ENCODE measurements at regions of chr3 and their contacts with region 1.

Region 1: GRCh38 chr3:121545574-121546455 is at the start of gene POLQ:
- DNase-seq: peak; percentile 91
- H3K4me3 ChIP-seq: peak within 1 kb of the TSS; percentile 65 to 93 (median 67)
- H3K27ac ChIP-seq: peak within 1 kb of the TSS; percentile 17
- H3K4me1 ChIP-seq: peaks cover 12% of the 10 kb centered on the region
- H3K27me3 ChIP-seq: no peaks in the 10 kb centered on the region
- CTCF ChIP-seq: no peak
- POLR2A ChIP-seq: peak; percentile 60
- total RNA-seq, gene POLQ: 9.5 and 10.8 TPM in 2 replicates

Region 2: DNA sequence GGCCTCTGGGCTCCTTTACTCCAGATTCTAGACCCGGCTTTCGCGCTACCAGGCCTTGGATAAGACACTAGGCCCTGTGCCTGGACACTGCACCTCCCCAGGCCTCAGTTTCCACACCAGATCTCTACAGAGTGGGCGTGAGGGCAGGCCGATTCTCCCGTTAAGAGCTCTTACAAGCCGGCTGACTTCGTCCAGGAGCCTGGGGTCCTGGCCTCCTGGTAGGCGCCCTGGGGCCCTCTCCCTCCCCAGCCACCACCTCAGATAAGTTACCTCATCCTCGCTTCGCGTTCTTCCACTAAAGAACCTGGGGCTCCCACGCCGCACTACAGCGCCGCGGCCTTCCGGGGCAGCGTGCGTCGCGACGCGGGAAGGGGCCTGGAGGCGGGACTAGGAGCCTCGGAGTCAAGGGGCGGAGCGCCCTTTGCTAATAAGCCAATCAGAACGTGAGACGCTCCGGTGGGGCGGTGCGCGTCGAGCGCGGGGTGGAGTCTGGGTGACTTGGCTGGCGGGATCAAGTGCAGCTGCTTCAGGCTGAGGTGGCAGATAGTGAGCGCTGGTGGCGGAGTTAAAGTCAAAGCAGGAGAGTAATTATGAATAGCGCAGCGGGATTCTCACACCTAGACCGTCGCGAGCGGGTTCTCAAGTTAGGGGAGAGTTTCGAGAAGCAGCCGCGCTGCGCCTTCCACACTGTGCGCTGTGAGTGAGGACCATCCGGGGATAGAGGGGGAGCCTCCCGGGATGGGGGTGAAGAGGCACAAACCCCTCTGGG is 289.1 kb after region 1 on chr3 and contains the starts of genes EAF2 and IQCB1:
- CTCF ChIA-PET with region 1: interaction called, 4 read pairs
- POLR2A ChIA-PET with region 1: no interaction called
- dilution Hi-C with region 1: no loop called
- intact Hi-C with region 1: loop called (anchors 2 kb)
- DNase-seq: peak; percentile 98
- H3K4me3 ChIP-seq: peak within 1 kb of the TSS; percentile 70 to 93 (median 72)
- H3K27ac ChIP-seq: peak within 1 kb of the TSS; percentile 67
- H3K4me1 ChIP-seq: peaks cover 8% of the 10 kb centered on the region
- H3K27me3 ChIP-seq: peaks cover 0 to 3% of the 10 kb centered on the region in 2 experiments
- CTCF ChIP-seq: no peak
- POLR2A ChIP-seq: no peak
- total RNA-seq, gene EAF2: 1.5 and 1.6 TPM in 2 replicates
- total RNA-seq, gene IQCB1: 21.6 and 22.0 TPM in 2 replicates

Region 3: DNA sequence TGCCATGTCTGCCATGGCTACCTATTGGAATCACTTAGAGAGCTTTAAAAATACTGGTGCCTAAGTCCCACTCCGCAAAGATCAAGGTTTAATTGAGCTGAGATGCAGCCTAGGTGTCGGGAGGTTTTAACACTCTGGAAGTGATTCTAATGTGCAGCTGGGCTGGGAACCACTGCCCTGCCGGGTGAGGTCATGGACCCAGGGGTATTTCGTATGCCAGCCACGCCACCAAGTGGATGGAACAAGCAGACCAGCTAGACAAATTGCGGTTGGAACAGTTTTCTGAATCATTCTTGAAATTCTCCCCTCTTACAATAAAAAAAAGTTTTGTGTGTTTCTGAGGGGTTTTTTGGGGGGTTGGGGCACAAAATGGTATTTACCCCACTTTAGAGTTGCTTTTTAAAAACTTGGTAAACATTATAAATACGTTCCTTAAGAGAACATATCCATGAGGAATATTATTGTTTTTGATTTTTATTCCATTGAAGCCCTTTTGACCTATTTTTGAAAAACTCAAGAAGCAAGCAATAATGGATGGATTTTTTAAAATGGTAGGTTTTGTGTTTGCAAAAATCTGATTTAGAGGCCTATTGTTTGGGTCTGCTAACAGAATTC is 713.0 kb after region 1 on chr3:
- CTCF ChIA-PET with region 1: interaction called, 36 read pairs
- POLR2A ChIA-PET with region 1: no interaction called
- dilution Hi-C with region 1: no loop called
- intact Hi-C with region 1: loop called (anchors 1 kb)
- DNase-seq: peak; percentile 54
- H3K4me3 ChIP-seq: no peak overlapping the region
- H3K27ac ChIP-seq: no peak overlapping the region
- H3K4me1 ChIP-seq: no peaks in the 10 kb centered on the region
- H3K27me3 ChIP-seq: peaks cover 7 to 11% of the 10 kb centered on the region in 2 experiments
- CTCF ChIP-seq: peak; percentile 56 to 63
- POLR2A ChIP-seq: no peak

Region 4: GRCh38 chr3:122356415-122356814 is 810.6 kb after region 1 on chr3:
- CTCF ChIA-PET with region 1: no interaction called
- POLR2A ChIA-PET with region 1: no interaction called
- dilution Hi-C with region 1: no loop called
- intact Hi-C with region 1: loop called (anchors 1 kb)
- DNase-seq: no peak
- H3K4me3 ChIP-seq: no peak overlapping the region
- H3K27ac ChIP-seq: no peak overlapping the region
- H3K4me1 ChIP-seq: no peaks in the 10 kb centered on the region
- H3K27me3 ChIP-seq: no peaks in the 10 kb centered on the region
- CTCF ChIP-seq: peak in 1 of 2 donors; percentile 16
- POLR2A ChIP-seq: no peak

Region 5: DNA sequence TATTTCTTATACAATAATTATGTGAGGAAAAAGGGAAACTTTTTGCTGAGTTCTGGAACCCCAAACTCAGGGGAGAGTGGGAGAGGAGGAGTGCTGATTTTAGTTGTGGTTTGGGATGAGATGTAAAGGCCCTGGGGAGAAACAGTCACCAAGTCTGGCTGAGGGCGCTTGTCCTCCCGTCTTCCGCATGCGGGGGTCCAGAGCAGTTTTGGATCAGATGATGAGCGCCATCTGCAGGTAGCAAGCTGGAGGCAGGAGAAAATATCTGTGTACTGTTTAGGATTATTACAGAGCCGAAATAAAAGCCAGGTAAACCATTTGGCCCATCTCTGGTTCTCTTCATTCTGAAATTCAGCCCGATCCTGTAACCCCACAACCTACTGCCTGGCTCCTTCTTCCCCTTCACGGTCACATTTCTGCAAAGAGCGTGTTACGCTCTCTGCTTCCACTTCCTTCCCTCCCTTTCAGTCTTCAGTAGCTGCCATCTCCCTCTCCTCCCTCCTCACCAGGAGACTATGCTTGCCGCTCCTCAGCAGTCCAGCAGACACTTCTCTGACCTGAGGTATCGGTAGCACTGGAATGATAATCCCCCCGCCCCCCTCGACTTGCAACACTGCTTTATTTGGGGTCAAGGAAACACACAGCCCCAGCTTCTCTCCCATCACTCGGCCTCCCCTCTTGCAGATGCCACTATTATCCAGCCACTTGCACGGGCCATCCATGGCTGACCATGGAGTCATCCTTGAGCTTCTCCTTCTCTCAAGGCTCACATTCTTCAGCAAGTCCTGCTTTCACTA is 1133.5 kb after region 1 on chr3:
- CTCF ChIA-PET with region 1: interaction called, 18 read pairs
- POLR2A ChIA-PET with region 1: no interaction called
- dilution Hi-C with region 1: no loop called
- intact Hi-C with region 1: loop called (anchors 1 kb)
- DNase-seq: peak; percentile 79
- H3K4me3 ChIP-seq: peak overlapping the region in 2 of 3 experiments; percentile 6 to 8
- H3K27ac ChIP-seq: peak overlapping the region; percentile 65
- H3K4me1 ChIP-seq: peaks cover 20% of the 10 kb centered on the region
- H3K27me3 ChIP-seq: no peaks in the 10 kb centered on the region
- CTCF ChIP-seq: peak; percentile 75 to 80
- POLR2A ChIP-seq: no peak

Region 6: DNA sequence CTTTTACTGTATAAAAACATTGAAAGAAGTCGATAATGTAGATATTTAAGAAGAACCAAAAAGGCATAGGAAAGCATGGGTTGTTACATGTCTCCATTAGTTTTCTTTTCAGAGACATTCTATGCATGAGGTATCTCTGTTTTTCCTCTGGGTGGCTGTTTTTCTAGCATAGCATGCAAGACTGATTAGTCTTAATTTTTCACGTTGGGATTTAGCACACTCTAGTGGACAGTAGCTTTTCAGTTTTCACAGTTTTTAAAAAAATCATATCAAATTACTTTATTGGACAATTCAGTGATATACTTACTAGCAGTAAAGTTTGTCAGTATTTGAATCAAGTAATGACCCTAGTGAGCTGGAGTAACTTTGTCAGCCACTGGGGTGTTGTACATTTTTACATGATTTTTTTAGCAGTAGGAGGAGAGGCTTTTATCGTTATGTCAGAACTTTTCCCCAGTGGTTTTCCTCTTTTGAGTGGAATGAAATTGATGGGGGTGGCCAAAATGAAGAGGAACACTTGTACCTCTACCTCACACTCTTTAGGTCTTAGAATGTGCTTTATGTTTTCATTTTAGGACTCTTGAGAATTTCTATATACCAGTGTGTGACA is 1713.1 kb after region 1 on chr3:
- CTCF ChIA-PET with region 1: no interaction called
- POLR2A ChIA-PET with region 1: no interaction called
- dilution Hi-C with region 1: no loop called
- intact Hi-C with region 1: loop called (anchors 10 kb)
- DNase-seq: peak; percentile 75
- H3K4me3 ChIP-seq: no peak overlapping the region
- H3K27ac ChIP-seq: no peak overlapping the region
- H3K4me1 ChIP-seq: no peaks in the 10 kb centered on the region
- H3K27me3 ChIP-seq: no peaks in the 10 kb centered on the region
- CTCF ChIP-seq: peak; percentile 41 to 55
- POLR2A ChIP-seq: no peak

Measured in endothelial cell of umbilical vein (primary cell).